ENCODE measurements at regions of chr6 and their contacts with region 1.

Region 1: DNA sequence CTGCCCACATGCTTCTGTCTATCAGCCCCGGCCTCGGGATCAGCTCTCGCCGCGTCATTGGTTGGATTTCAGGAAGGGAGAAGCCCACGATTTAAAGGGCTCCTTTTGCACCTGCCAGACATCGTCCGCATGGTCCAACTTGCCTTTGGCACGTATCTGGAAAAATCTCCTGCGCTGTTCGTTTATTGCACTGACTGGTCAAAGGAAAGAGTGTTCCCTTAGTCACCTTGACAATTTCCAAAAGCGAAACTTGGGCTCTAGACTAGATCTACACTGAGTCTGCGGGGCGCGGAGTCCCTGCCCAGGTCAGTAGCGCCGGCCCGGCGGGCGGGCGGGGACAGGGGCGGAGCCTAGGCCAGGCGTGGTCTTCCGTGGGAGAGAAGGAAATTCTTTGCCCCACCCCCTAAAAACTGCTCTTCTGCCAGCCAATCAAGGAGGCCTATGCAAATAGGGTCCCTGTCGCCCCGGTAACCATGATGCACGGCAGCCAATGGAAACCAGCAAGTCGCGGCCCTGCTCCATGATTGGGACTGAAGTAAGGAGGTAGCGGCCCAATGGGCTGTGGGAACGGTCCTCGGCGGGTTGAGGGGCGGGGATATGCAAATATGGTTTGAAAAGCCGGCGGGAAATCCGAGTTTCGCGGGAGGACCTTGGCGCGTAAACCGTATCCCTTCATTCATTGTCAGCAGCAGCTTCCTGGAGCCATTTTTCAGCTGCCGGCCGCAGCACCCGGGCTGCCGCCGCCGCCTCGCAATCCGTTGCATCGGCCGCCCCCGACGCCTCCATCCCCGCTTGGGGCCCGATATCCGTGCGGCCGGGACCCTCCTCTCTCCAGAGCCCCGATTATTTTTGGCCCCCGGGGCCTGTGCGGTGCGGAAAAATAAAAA is at the start of gene E2F3:
- DNase-seq: peak; percentile 100
- H3K4me3 Mint-ChIP-seq: peak within 1 kb of the TSS; percentile 96
- H3K27ac Mint-ChIP-seq: peak within 1 kb of the TSS; percentile 98
- H3K4me1 Mint-ChIP-seq: peaks cover 37% of the 10 kb centered on the region
- H3K27me3 Mint-ChIP-seq: no peaks in the 10 kb centered on the region
- total RNA-seq, gene E2F3: 29.8 to 30.1 TPM

Region 2: GRCh38 chr6:20212392-20213217 is 188.8 kb before region 1 on chr6 and contains the start of gene MBOAT1:
- CTCF ChIA-PET with region 1: interaction called, 4 read pairs
- POLR2A ChIA-PET with region 1: interaction called, 22 read pairs
- DNase-seq: peak; percentile 79
- H3K4me3 Mint-ChIP-seq: peak within 1 kb of the TSS; percentile 93
- H3K27ac Mint-ChIP-seq: peak within 1 kb of the TSS; percentile 95
- H3K4me1 Mint-ChIP-seq: peaks cover 46% of the 10 kb centered on the region
- H3K27me3 Mint-ChIP-seq: no peaks in the 10 kb centered on the region
- total RNA-seq, gene MBOAT1: 25.5 to 27.1 TPM

Region 3: DNA sequence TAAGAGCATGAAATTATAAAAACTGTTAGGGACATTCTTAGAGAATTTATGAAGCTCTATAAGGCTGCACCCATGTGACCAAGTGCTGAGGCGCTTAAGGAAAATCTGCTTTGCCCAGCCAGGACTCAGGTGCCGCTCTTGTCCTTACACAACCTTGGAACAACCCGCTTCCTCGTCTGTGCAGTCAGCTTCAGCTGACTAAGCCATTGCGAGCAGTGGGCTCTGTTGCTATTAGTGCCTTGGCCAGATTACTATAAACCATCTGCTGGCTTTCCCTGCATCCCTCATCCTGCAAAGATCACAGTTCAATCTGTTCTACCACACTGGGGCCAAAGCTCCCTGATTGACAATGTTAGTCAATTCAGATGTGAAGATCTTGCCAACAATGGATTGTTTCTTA is 88.8 kb before region 1 on chr6:
- CTCF ChIA-PET with region 1: no interaction called
- POLR2A ChIA-PET with region 1: interaction called, 11 read pairs
- DNase-seq: no peak
- H3K4me3 Mint-ChIP-seq: no peak overlapping the region
- H3K27ac Mint-ChIP-seq: no peak overlapping the region
- H3K4me1 Mint-ChIP-seq: peaks cover 3% of the 10 kb centered on the region
- H3K27me3 Mint-ChIP-seq: peaks cover 10% of the 10 kb centered on the region

Region 4: DNA sequence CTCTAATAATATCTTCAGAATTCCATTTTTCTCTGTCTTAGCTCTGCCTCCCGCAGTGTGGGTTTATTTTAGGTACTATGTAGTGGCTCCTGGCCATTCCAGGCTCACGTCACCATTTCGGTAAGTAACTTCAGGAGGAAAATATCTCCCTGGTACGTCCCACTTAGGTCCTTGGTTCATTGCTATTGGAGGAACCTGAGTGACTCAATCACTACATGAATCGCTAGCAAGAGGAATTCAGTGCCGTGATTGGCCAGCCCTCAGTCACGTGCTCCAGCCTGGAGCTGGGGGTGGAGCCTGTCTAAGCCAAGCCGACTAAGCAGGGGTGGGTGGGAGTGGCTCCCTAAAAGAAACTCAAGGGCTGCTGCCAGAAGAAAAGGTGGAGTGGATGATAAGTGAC is 67.1 kb before region 1 on chr6:
- CTCF ChIA-PET with region 1: no interaction called
- POLR2A ChIA-PET with region 1: interaction called, 11 read pairs
- DNase-seq: no peak
- H3K4me3 Mint-ChIP-seq: no peak overlapping the region
- H3K27ac Mint-ChIP-seq: no peak overlapping the region
- H3K4me1 Mint-ChIP-seq: peaks cover 24% of the 10 kb centered on the region
- H3K27me3 Mint-ChIP-seq: peaks cover 4% of the 10 kb centered on the region

Region 5: DNA sequence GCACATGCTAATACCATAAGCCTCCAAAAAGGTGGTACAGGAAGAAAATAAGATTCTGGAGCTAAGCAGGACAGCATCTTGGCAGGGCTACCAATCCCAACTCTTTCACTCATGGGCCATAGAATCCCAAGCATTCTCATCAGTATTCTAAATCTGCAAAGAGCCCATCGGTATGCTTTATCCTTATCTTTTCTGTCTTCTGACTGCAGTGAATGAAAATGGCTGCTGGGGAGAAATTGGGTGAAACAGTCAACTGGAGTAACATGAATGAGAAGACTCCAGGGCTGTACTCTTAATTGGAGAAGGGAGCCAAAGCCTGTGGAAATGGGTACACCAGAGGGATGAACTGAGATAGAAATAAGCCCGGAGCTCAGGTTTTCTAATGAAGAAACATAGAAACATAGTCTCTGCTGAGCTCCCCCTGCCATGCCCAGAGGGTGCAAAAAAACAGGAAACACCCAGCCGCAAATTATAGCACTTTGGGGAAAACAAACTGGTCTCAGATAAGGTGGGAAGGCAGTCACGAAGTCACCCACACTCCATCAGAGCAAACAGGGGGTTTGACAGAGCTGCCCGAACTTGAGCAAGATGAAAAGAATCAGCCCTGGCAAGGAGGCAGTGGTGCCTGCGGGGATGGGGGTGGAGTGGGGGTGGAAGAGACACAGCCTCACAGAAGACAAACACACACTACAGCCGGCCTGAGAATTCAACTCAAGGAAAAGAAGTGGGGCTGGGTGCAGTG is 35.2 kb before region 1 on chr6:
- CTCF ChIA-PET with region 1: interaction called, 15 read pairs
- POLR2A ChIA-PET with region 1: interaction called, 80 read pairs
- DNase-seq: peak; percentile 49
- H3K4me3 Mint-ChIP-seq: peak overlapping the region; percentile 63
- H3K27ac Mint-ChIP-seq: peak overlapping the region; percentile 98
- H3K4me1 Mint-ChIP-seq: peaks cover 58% of the 10 kb centered on the region
- H3K27me3 Mint-ChIP-seq: no peaks in the 10 kb centered on the region

Region 6: GRCh38 chr6:20417819-20418218 is 16.4 kb after region 1 on chr6:
- CTCF ChIA-PET with region 1: interaction called, 8 read pairs
- POLR2A ChIA-PET with region 1: interaction called, 46 read pairs
- DNase-seq: no peak
- H3K4me3 Mint-ChIP-seq: no peak overlapping the region
- H3K27ac Mint-ChIP-seq: no peak overlapping the region
- H3K4me1 Mint-ChIP-seq: peaks cover 54% of the 10 kb centered on the region
- H3K27me3 Mint-ChIP-seq: no peaks in the 10 kb centered on the region

Region 7: GRCh38 chr6:20534295-20535262 is 133.1 kb after region 1 on chr6 and contains the start of gene CDKAL1:
- CTCF ChIA-PET with region 1: interaction called, 25 read pairs
- POLR2A ChIA-PET with region 1: interaction called, 32 read pairs
- DNase-seq: peak; percentile 95
- H3K4me3 Mint-ChIP-seq: peak within 1 kb of the TSS; percentile 97
- H3K27ac Mint-ChIP-seq: peak within 1 kb of the TSS; percentile 94
- H3K4me1 Mint-ChIP-seq: peaks cover 48% of the 10 kb centered on the region
- H3K27me3 Mint-ChIP-seq: peaks cover 1% of the 10 kb centered on the region
- total RNA-seq, gene CDKAL1: 21.2 to 23.0 TPM

Measured in activated CD4-positive, alpha-beta memory T cell treated with anti-CD3 and anti-CD28 coated beads, Interleukin-2, amount 10 ng/mL, durations not matched to agents 7 days and 5 days (primary cell).